OCI-LY7 (cell line): ENCODE measurements at regions of chr10 and their contacts with region 1.

Region 1: GRCh38 chr10:71383972-71384687 is 12.6 kb upstream of the CDH23 start:
- DNase-seq: peak; percentile 62
- H3K4me3 ChIP-seq: no peak overlapping the region
- H3K27ac ChIP-seq: no peak overlapping the region
- H3K4me1 ChIP-seq: peaks cover 3% of the 10 kb centered on the region
- CTCF ChIP-seq: peak; percentile 95

Region 2: GRCh38 chr10:71569775-71570588 is 185.9 kb after region 1 on chr10:
- CTCF ChIA-PET with region 1: no interaction called
- POLR2A ChIA-PET with region 1: no interaction called
- intact Hi-C with region 1: loop called (anchors 1 kb)
- DNase-seq: peak; percentile 75
- H3K4me3 ChIP-seq: no peak overlapping the region
- H3K27ac ChIP-seq: no peak overlapping the region
- H3K4me1 ChIP-seq: no peaks in the 10 kb centered on the region
- CTCF ChIP-seq: peak; percentile 90

Region 3: GRCh38 chr10:71608819-71609768 is 225.0 kb after region 1 on chr10:
- CTCF ChIA-PET with region 1: no interaction called
- POLR2A ChIA-PET with region 1: no interaction called
- intact Hi-C with region 1: loop called (anchors 5 kb)
- DNase-seq: peak; percentile 78
- H3K4me3 ChIP-seq: no peak overlapping the region
- H3K27ac ChIP-seq: no peak overlapping the region
- H3K4me1 ChIP-seq: no peaks in the 10 kb centered on the region
- CTCF ChIP-seq: peak; percentile 90

Region 4: DNA sequence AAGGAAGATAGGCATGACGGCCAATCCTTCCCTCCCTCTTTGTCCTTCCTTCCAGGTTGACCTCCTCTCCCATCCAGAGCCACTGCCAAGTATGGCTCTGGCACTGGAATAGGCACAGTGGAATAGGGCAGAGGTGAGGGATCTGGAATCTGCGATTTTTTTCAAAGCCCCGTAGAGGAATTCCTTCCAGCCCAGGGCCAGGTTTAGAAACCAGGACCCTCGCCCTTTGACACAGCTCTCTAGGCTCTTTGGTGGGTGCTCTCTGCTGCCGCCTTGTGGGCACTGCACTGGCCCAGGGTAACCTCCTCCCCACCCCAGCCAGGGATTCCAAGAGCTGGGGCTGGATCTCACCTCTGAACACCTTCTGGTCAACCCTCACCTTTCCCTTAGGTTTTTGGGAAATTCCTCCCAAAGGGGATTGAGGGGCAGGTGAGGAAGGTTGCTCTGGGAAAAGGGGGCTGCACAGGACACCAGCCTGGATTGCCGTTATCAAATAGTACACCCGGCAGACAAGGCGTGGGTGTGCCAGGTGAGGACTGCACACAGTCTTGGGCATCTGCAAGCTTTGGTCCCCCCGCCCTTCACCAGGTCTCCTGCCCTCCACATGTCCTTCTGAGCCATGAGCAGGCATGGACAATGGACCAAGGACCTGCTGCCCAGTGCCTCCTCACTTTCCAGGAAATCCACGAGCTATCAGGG is 312.6 kb after region 1 on chr10:
- CTCF ChIA-PET with region 1: no interaction called
- POLR2A ChIA-PET with region 1: no interaction called
- intact Hi-C with region 1: loop called (anchors 1 kb)
- DNase-seq: peak; percentile 77
- H3K4me3 ChIP-seq: no peak overlapping the region
- H3K27ac ChIP-seq: no peak overlapping the region
- H3K4me1 ChIP-seq: peaks cover 46% of the 10 kb centered on the region
- CTCF ChIP-seq: peak; percentile 99

Region 5: DNA sequence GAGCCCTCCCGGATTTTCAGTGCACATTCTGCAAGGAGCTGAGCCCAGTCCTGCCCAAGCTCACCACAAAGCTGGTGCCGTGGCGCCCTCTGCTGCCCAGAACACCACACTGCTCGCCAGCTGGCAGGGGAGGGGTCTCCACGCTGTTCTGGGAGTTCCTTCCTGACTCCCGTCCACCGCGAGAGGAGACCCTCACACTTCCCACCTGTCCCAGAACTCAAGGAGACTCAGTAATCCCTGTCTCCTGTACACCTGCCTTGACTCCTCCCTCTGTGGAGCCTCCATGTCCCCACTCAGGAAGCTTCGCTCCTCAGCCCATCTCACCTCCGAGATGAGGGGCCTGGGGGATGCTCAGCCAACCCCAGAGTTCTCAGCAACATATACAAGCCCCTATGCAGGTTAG is 324.2 kb after region 1 on chr10:
- CTCF ChIA-PET with region 1: no interaction called
- POLR2A ChIA-PET with region 1: no interaction called
- intact Hi-C with region 1: loop called (anchors 1 kb)
- DNase-seq: peak; percentile 73
- H3K4me3 ChIP-seq: no peak overlapping the region
- H3K27ac ChIP-seq: no peak overlapping the region
- H3K4me1 ChIP-seq: peaks cover 13% of the 10 kb centered on the region
- CTCF ChIP-seq: peak; percentile 98

Region 6: GRCh38 chr10:71805776-71806703 is 421.9 kb after region 1 on chr10:
- CTCF ChIA-PET with region 1: no interaction called
- POLR2A ChIA-PET with region 1: no interaction called
- intact Hi-C with region 1: loop called (anchors 10 kb)
- DNase-seq: no peak
- H3K4me3 ChIP-seq: no peak overlapping the region
- H3K27ac ChIP-seq: no peak overlapping the region
- H3K4me1 ChIP-seq: peaks cover 13% of the 10 kb centered on the region
- CTCF ChIP-seq: no peak